ENCODE measurements at regions of chr1 and their contacts with region 1.

Region 1: GRCh38 chr1:107782217-107782845 is 182.6 kb downstream of the VAV3 start:
- DNase-seq: peak; percentile 75 to 88 (median 80)
- H3K4me3 ChIP-seq: no peak overlapping the region
- H3K27ac ChIP-seq: no peak overlapping the region
- H3K4me1 ChIP-seq: peaks cover 7 to 44% (median 36%) of the 10 kb centered on the region in 4 experiments
- H3K27me3 ChIP-seq: no peaks in the 10 kb centered on the region

Region 2: GRCh38 chr1:107599220-107599619 is 183.1 kb before region 1 on chr1:
- CTCF ChIA-PET with region 1: no interaction called
- POLR2A ChIA-PET with region 1: no interaction called
- DNase-seq: no peak
- H3K4me3 ChIP-seq: no peak overlapping the region
- H3K27ac ChIP-seq: no peak overlapping the region
- H3K4me1 ChIP-seq: no peaks in the 10 kb centered on the region
- H3K27me3 ChIP-seq: no peaks in the 10 kb centered on the region

Region 3: DNA sequence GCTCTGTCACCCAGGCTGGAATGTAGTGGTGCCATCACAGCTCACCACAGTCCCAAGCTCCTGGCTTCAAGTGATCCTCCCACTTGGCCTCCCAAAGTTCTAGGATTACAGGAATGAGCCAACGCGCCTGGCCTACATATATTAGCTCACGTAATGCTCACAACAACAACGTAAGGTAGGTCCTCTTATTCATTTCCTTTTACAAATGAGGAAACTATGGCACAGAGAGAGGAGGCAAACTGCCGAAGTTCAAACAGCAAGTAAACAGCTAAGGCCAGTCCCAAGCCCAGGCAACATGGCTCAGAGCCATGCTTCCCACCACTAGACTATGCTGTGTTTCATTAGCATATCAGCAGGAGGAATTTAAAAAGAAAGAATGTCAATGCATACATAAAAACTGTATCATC is 101.7 kb before region 1 on chr1:
- CTCF ChIA-PET with region 1: no interaction called
- POLR2A ChIA-PET with region 1: no interaction called
- DNase-seq: no peak
- H3K4me3 ChIP-seq: no peak overlapping the region
- H3K27ac ChIP-seq: no peak overlapping the region
- H3K4me1 ChIP-seq: no peaks in the 10 kb centered on the region
- H3K27me3 ChIP-seq: no peaks in the 10 kb centered on the region

Region 4: DNA sequence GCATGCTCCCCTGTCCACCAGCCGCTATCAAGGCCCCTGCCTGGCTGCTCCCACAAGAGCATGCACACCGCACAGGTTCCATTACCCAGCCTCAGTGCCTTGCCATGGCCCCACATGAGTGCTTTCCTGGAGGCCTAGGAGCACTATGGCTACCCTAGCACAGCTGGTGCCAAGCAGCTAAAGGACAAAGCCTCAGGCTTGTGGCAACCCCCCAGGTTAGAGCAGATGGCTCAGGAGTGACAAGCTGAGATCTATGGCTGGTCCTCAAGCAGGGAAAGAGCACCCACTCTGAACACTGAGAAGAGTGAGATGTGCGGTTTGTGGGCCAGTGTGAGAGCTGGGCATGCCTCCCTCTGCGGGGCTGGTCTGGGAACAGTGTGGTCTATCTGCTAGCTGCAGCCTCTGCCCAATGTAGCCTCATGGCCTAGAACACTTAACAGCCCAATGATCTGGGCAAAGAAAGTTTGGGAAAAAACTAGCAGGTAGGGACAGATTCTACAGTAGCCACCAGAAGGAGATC is 52.9 kb after region 1 on chr1:
- CTCF ChIA-PET with region 1: interaction called, 16 read pairs
- POLR2A ChIA-PET with region 1: interaction called, 4 read pairs
- DNase-seq: no peak
- H3K4me3 ChIP-seq: no peak overlapping the region
- H3K27ac ChIP-seq: no peak overlapping the region
- H3K4me1 ChIP-seq: peaks cover 40 to 92% (median 64%) of the 10 kb centered on the region in 4 experiments
- H3K27me3 ChIP-seq: no peaks in the 10 kb centered on the region

Region 5: DNA sequence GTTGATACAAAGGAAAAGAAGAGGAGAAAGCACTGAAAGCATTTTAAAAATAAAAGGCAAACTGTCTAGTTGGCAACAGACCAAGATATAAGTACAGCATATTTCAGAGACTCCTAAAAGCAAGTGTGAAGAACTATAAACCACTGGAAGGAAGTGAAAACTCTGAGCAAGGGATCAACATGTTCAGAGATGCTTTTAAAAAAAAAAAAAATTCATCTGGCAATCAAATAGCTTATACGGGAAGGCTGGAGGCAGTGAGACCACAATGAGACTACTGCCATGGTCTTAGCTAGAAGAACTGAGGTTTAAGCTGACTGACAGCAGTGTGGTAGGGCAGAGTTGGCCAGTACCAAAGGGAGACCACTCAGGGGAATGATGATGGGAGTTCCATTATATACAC is 58.4 kb after region 1 on chr1:
- CTCF ChIA-PET with region 1: interaction called, 16 read pairs
- POLR2A ChIA-PET with region 1: interaction called, 4 read pairs
- DNase-seq: peak in 2 of 3 donors; percentile 71 to 81
- H3K4me3 ChIP-seq: peak overlapping the region in 3 of 7 experiments; percentile 6 to 43 (median 16)
- H3K27ac ChIP-seq: peak overlapping the region in 1 of 2 experiments; percentile 70
- H3K4me1 ChIP-seq: peaks cover 20 to 91% (median 57%) of the 10 kb centered on the region in 4 experiments
- H3K27me3 ChIP-seq: no peaks in the 10 kb centered on the region

Region 6: GRCh38 chr1:107963601-107964335 is 181.4 kb after region 1 on chr1:
- CTCF ChIA-PET with region 1: interaction called, 29 read pairs
- POLR2A ChIA-PET with region 1: no interaction called
- DNase-seq: peak in 2 of 3 donors; percentile 63 to 76
- H3K4me3 ChIP-seq: peak overlapping the region; percentile 95 to 99 (median 98)
- H3K27ac ChIP-seq: peak overlapping the region; percentile 59 to 92
- H3K4me1 ChIP-seq: peaks cover 16 to 46% (median 33%) of the 10 kb centered on the region in 4 experiments
- H3K27me3 ChIP-seq: no peaks in the 10 kb centered on the region

Region 7: DNA sequence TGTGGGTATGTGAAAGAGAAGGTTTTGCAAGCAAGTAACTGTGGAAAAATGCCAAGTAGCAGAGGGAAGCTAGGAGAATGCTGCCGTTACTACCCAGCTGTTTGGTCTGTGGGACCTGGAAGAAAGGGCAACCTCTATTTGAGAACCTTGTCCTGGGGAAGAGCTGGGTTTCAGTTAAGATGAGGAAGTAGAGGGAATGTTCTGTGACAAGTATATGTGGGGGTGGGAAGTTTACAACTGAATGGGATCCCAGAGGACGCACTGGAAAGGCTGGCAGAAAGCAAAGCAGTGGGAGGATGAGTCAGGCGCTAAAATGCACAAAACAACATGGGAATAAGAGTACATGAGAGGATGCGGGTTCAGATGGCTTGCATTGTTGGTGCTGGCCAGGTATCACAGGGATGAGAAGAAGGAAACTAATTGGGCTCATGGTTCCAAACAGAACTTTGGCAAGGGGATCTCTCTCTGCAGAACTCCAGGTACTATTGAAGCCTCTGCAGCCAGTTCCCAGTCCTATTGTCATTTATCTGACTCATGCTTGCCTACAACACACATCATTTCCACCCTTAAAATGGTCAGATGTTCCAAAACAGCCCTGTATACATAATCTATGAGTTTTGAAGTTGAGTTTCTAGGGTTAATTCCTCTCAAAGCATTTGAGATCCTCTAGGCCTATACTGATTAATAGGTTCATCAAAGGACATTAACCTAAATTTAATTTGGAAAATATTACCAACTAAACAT is 271.1 kb after region 1 on chr1:
- CTCF ChIA-PET with region 1: interaction called, 10 read pairs
- POLR2A ChIA-PET with region 1: no interaction called
- DNase-seq: peak in 1 of 3 donors; percentile 44
- H3K4me3 ChIP-seq: peak overlapping the region in 3 of 7 experiments; percentile 20 to 32 (median 23)
- H3K27ac ChIP-seq: peak overlapping the region; percentile 3 to 52
- H3K4me1 ChIP-seq: peaks cover 42 to 81% (median 78%) of the 10 kb centered on the region in 4 experiments
- H3K27me3 ChIP-seq: no peaks in the 10 kb centered on the region

Region 8: GRCh38 chr1:108118018-108118902 is 335.9 kb after region 1 on chr1:
- CTCF ChIA-PET with region 1: interaction called, 271 read pairs
- POLR2A ChIA-PET with region 1: no interaction called
- DNase-seq: peak; percentile 43 to 78 (median 50)
- H3K4me3 ChIP-seq: peak overlapping the region in 2 of 7 experiments; percentile 6
- H3K27ac ChIP-seq: no peak overlapping the region
- H3K4me1 ChIP-seq: peaks cover 7 to 40% (median 28%) of the 10 kb centered on the region in 4 experiments
- H3K27me3 ChIP-seq: no peaks in the 10 kb centered on the region

Region 9: DNA sequence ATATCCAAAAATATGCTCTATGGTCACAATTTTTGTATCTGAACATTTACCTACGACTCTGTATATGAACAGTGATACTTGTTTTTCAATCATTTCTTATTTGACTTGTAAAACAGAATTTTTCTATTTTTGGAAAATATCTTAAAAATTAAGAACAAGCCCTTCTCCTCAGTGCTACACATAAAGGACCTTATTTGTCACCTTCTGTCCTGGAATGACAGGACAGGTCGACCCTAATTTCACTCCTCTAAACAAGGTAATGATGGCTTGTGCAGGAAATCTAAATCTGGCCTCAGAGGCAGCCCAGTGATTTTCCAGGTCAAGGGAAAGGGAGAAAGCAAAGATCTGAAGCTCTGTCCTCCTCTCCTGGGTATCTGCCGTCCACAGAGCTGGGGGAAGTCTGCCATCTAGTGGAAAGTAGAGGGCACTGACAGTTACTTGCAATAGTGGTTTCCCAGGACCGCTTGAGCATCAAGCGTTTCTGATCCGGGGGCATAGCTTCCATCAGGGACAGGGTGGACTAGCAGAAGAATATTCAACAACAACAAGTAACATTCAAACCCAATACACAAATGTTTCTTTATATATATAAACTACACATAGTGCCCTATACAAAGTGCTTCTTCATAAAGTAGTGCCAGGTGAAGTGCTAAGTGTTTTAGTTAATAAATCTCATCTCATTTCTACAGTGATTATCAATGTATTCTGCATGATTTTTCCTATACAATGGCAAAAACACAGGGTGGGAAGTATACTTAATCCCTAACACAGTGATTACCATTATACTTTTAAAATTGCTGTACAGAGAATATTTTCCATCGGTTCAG is 343.2 kb after region 1 on chr1:
- CTCF ChIA-PET with region 1: interaction called, 271 read pairs
- POLR2A ChIA-PET with region 1: interaction called, 5 read pairs
- DNase-seq: peak; percentile 84 to 89 (median 85)
- H3K4me3 ChIP-seq: no peak overlapping the region
- H3K27ac ChIP-seq: no peak overlapping the region
- H3K4me1 ChIP-seq: peaks cover 0 to 16% (median 8%) of the 10 kb centered on the region in 4 experiments
- H3K27me3 ChIP-seq: no peaks in the 10 kb centered on the region

Measured in common myeloid progenitor, CD34-positive (primary cell).